MCF 10A (cell line): ENCODE measurements at regions of chr15 and their contacts with region 1.

Region 1: DNA sequence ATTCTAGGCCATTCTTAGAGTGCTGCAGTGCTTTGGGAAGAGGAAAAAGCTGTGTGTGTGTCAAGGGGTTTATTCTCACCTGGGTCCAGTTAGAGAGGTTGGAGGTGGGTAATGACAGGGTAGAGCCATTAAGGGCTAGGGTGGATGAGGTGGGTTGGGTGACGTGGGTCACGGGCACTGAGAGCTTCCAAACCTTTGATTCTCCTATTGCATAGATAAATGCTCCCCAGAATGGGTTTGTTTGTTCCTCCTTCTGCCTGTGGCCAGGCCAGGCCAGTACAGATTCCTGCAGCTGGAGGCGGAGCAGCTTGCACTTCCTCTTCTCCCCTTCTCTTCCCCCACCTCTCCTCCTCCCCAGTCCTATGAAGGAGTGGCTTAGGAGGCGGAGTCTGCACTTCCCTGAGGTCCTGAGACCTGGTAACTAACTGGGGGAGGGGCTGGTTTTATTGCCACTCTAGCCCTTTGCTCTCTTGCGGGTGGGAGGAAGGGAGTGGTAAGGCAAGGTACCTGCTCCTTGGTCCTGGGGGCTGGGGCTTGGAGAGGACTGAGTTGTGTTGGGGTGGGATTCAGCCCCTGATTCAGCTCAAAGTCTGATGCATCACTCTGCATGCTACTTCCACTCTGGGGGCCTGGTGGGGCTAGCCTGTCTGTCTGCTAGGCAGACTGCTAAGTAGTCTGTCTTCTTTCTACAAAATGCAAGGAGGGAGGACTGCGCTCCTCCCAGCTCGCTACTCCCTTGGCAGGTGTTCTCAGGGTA is 3.5 kb downstream of the SPINT1 start:
- DNase-seq: peak; percentile 69
- H3K4me3 Mint-ChIP-seq: peak overlapping the region; percentile 96
- H3K27ac Mint-ChIP-seq: peak overlapping the region; percentile 46
- H3K4me1 Mint-ChIP-seq: peaks cover 29% of the 10 kb centered on the region
- H3K27me3 Mint-ChIP-seq: no peaks in the 10 kb centered on the region
- CTCF ChIP-seq: no peak

Region 2: GRCh38 chr15:40776522-40777137 is 70.8 kb before region 1 on chr15:
- CTCF ChIA-PET with region 1: interaction called, 3 read pairs
- POLR2A ChIA-PET with region 1: interaction called, 21 read pairs
- intact Hi-C with region 1: no loop called
- DNase-seq: peak; percentile 96
- H3K4me3 Mint-ChIP-seq: peak overlapping the region; percentile 57
- H3K27ac Mint-ChIP-seq: peak overlapping the region; percentile 72
- H3K4me1 Mint-ChIP-seq: peaks cover 12% of the 10 kb centered on the region
- H3K27me3 Mint-ChIP-seq: no peaks in the 10 kb centered on the region
- CTCF ChIP-seq: no peak

Region 3: DNA sequence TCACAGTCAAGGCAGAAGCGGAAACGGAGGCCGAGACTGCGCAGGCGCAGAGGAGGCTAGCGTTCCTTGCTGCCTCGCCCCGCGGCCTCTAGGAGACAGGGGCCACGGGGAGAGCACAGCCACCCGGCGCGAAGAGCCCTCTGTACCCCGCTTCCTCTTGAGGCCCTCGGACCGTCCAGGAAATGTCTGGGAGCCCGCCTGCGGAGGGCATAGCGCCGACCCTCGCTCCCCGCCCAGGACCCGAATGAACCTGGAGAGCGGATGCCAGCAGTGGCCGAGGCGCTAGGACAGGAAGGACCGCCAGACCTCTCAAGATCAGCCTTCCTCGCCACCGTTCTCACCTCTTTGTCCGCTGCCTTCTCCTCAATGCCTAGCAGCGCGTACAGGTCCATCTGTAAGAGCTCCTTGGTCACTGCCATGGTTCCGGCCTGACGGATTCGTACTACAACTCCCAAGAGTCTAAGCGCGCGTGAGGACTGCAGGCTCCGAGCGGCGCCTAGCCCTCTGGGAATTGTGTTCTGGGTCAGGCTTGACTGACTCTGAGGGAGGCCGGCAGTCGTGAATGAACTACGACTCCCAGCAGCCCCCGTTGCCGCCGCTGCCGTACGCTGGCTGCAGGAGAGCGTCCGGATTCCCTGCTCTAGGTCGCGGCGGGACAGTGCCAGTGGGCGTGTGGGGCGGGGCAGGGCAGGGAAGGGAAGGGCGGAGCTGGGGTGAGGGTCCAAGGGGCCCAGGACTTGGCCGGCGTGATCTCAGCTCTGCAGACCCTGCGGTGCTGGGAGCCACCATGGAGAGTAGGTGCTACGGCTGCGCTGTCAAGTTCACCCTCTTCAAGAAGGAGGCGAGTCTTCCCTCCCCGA is 40.1 kb before region 1 on chr15 and contains the starts of genes DNAJC17 and ZFYVE19:
- CTCF ChIA-PET with region 1: interaction called, 3 read pairs
- POLR2A ChIA-PET with region 1: interaction called, 47 read pairs
- intact Hi-C with region 1: no loop called
- DNase-seq: peak; percentile 98
- H3K4me3 Mint-ChIP-seq: peak within 1 kb of the TSS; percentile 81
- H3K27ac Mint-ChIP-seq: peak within 1 kb of the TSS; percentile 83
- H3K4me1 Mint-ChIP-seq: peaks cover 12% of the 10 kb centered on the region
- H3K27me3 Mint-ChIP-seq: no peaks in the 10 kb centered on the region
- CTCF ChIP-seq: peak; percentile 10
- total RNA-seq, gene DNAJC17: 55.1 and 58.1 TPM in 2 replicates
- total RNA-seq, gene ZFYVE19: 19.2 and 19.9 TPM in 2 replicates

Region 4: DNA sequence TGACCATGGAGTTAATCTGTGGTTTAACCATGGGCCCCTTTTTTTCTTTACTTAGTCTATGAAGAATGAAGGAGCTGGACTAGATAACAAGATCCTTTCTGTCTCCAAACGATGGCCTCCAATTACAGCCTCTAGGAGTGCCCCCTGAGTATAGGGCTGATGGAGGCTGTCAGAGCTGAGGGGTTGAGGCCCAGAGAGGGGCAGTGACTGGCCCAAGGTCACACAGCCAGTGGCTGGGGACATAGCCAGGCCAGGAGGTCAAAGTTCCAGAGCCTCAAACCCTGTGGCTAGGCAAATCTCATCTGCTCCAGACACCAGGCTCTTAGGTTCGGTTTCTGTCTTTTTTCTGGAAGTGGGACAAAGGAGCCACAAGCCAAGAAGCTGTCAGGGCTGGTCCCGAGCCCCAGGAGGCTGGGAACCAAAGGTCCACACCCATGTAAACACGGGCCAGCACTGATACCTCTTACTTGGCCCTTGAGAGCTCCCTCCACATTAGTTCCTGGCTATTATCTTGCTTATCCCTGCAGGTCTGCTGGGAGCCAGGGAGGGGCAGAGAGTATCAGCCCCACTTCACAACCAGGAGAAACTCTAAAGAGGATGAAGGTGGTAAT is 16.4 kb after region 1 on chr15:
- CTCF ChIA-PET with region 1: interaction called, 130 read pairs
- POLR2A ChIA-PET with region 1: interaction called, 31 read pairs
- intact Hi-C with region 1: no loop called
- DNase-seq: no peak
- H3K4me3 Mint-ChIP-seq: no peak overlapping the region
- H3K27ac Mint-ChIP-seq: no peak overlapping the region
- H3K4me1 Mint-ChIP-seq: peaks cover 42% of the 10 kb centered on the region
- H3K27me3 Mint-ChIP-seq: no peaks in the 10 kb centered on the region
- CTCF ChIP-seq: no peak

Region 5: GRCh38 chr15:41304149-41304770 is 456.9 kb after region 1 on chr15:
- CTCF ChIA-PET with region 1: no interaction called
- POLR2A ChIA-PET with region 1: no interaction called
- intact Hi-C with region 1: no loop called
- DNase-seq: no peak
- H3K4me3 Mint-ChIP-seq: no peak overlapping the region
- H3K27ac Mint-ChIP-seq: no peak overlapping the region
- H3K4me1 Mint-ChIP-seq: no peaks in the 10 kb centered on the region
- H3K27me3 Mint-ChIP-seq: no peaks in the 10 kb centered on the region
- CTCF ChIP-seq: no peak